Activated CD4-positive, alpha-beta T cell treated with anti-CD3 and anti-CD28 coated beads, Interleukin-2, amount 10 ng/mL, durations not matched to agents 24 days and 14 days (primary cell): ENCODE measurements at regions of chr3 and their contacts with region 1.

Region 1: GRCh38 chr3:146577662-146578061 is 27.5 kb downstream of the PLSCR5 start:
- DNase-seq: peak; percentile 77
- H3K4me3 Mint-ChIP-seq: no peak overlapping the region
- H3K27ac Mint-ChIP-seq: no peak overlapping the region
- H3K4me1 Mint-ChIP-seq: no peaks in the 10 kb centered on the region
- H3K27me3 Mint-ChIP-seq: peaks cover 15% of the 10 kb centered on the region

Region 2: DNA sequence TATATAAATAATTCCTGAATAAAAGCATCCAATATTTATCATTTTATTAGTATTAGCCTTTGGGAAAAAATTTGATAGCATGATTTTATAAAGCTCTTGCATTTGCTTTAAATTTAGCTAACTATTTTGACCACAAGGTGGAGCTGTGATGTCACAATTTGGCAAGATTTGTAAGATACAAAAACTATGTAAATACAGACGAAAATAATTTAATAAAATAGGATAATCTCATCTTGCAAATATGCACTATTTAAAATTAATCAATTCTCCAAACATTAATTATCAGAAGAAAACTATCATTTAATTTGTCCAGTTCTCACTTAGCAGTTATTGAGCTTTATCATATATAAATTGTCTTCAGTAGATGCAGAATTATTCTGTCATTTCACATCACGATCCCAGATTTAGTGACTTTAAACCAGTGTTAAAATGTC is 512.1 kb before region 1 on chr3:
- intact Hi-C with region 1: loop called (anchors 5 kb)
- DNase-seq: peak; percentile 58
- H3K4me3 Mint-ChIP-seq: no peak overlapping the region
- H3K27ac Mint-ChIP-seq: no peak overlapping the region
- H3K4me1 Mint-ChIP-seq: no peaks in the 10 kb centered on the region
- H3K27me3 Mint-ChIP-seq: no peaks in the 10 kb centered on the region

Region 3: GRCh38 chr3:146189519-146190173 is 388.0 kb before region 1 on chr3:
- intact Hi-C with region 1: loop called (anchors 1 kb)
- DNase-seq: peak; percentile 73
- H3K4me3 Mint-ChIP-seq: no peak overlapping the region
- H3K27ac Mint-ChIP-seq: no peak overlapping the region
- H3K4me1 Mint-ChIP-seq: no peaks in the 10 kb centered on the region
- H3K27me3 Mint-ChIP-seq: peaks cover 8% of the 10 kb centered on the region

Region 4: DNA sequence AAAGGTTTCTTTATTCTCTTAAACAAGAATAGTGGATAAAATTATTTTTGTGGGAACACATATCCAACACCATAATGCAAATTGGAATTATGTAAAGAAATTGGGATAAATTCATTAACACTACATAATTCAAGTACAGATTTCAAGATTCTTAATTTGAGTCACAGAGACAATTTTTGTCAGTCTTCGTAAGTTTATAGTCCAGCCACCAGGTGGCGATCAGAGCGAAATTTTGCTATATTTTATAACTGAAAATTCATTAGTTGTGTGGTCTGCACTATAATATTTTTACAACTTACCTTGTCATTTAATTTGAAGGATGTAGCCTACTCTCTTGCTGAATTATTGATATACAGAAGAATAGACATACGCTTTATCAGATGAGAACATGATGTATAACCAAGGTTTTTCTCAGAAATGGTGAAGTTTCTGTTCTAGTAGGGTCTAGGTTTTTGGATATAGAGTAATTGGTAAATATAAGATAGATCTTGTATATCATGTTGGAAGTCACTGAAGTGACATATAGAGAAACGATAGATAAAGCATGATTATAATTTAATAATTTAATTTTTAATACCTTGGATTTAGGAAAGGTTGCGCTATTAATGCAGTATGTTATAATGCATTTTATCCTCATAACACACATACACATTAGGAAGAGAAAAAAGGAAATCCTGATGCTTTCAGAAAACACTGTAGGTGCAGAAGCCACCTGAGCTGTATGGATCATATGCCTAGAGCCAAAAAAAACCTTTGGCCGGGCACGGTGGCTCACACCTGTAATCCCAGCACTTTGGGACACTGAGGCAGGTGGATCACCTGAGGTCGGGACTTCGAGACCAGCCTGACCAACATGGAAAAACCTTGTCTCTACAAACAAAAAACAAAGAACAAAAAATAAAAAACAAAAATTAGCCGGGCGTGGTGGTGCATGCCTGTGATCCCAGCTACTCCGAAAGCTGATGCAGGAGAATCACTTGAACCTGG is 358.5 kb before region 1 on chr3:
- intact Hi-C with region 1: loop called (anchors 1 kb)
- DNase-seq: peak; percentile 71
- H3K4me3 Mint-ChIP-seq: no peak overlapping the region
- H3K27ac Mint-ChIP-seq: no peak overlapping the region
- H3K4me1 Mint-ChIP-seq: no peaks in the 10 kb centered on the region
- H3K27me3 Mint-ChIP-seq: peaks cover 3% of the 10 kb centered on the region

Region 5: GRCh38 chr3:146550743-146551510 is 26.7 kb before region 1 on chr3:
- intact Hi-C with region 1: loop called (anchors 2 kb)
- DNase-seq: peak; percentile 71
- H3K4me3 Mint-ChIP-seq: peak overlapping the region; percentile 75
- H3K27ac Mint-ChIP-seq: peak overlapping the region; percentile 52
- H3K4me1 Mint-ChIP-seq: peaks cover 68% of the 10 kb centered on the region
- H3K27me3 Mint-ChIP-seq: peaks cover 1% of the 10 kb centered on the region